Upper lobe of right lung (tissue), 1 donor: ENCODE measurements at regions of chr14 and their contacts with region 1.

Region 1: GRCh38 chr14:64764641-64765520 is 60.7 kb downstream of the PLEKHG3 start:
- DNase-seq: peak; percentile 86
- ATAC-seq: peak; percentile 88
- H3K4me3 ChIP-seq: peak overlapping the region; percentile 5
- H3K27ac ChIP-seq: peak overlapping the region; percentile 9
- H3K4me1 ChIP-seq: peaks cover 23% of the 10 kb centered on the region
- H3K27me3 ChIP-seq: no peaks in the 10 kb centered on the region
- CTCF ChIP-seq: peak; percentile 90

Region 2: DNA sequence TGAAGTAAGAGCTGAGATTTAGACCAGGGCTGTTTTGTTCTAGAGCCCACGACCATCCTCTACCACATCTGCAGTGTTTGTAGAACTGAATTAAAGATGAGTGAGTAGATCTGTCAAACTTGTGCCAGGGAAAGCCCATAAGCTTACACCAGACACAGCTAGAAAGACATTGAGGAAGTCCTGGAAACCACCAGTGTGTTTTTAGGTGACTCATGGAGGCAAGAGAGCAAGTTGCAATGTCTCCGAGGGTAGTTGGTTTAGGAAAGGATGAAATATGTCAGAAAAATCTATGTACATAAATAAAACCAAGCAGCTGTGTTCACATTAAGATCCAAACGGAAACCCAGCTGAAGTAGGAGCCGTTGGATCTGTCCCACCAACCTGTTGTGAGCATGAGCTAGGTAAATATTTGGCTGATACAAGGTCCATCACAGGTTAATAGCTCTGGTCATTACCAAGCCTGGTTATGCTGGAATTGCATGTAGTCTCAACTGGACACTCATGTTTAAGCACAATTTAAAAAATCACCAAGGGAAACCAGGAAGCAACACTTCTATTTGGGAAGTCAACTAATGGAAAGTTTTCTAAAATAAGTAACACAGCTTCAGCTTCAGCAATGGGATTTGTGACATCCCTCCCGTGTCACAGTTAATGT is 110.5 kb before region 1 on chr14:
- intact Hi-C with region 1: no loop called
- DNase-seq: no peak
- ATAC-seq: peak; percentile 82
- H3K4me3 ChIP-seq: no peak overlapping the region
- H3K27ac ChIP-seq: peak overlapping the region; percentile 52
- H3K4me1 ChIP-seq: peaks cover 5% of the 10 kb centered on the region
- H3K27me3 ChIP-seq: no peaks in the 10 kb centered on the region
- CTCF ChIP-seq: no peak

Region 3: DNA sequence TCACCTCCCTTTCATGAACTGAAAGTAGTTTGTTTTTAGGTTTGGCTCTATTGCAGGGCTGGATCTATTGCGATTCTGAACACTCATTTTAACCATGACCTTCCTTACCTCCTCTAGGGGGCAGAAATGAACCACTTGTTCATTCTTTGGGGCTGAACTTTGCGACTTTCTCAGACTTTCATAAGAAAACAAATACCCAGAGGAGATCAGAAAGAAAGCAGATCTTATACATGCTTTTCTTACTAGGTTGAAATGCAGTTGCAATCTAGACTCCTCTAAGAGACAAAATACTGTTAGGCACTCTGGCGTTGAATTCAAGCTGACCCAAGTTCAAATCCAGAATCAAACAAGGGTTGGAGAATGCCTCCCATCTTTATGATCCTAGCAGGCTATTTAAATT is 93.3 kb before region 1 on chr14:
- intact Hi-C with region 1: loop called (anchors 5 kb)
- DNase-seq: no peak
- ATAC-seq: peak; percentile 78
- H3K4me3 ChIP-seq: no peak overlapping the region
- H3K27ac ChIP-seq: no peak overlapping the region
- H3K4me1 ChIP-seq: peaks cover 6% of the 10 kb centered on the region
- H3K27me3 ChIP-seq: no peaks in the 10 kb centered on the region
- CTCF ChIP-seq: peak; percentile 75

Region 4: DNA sequence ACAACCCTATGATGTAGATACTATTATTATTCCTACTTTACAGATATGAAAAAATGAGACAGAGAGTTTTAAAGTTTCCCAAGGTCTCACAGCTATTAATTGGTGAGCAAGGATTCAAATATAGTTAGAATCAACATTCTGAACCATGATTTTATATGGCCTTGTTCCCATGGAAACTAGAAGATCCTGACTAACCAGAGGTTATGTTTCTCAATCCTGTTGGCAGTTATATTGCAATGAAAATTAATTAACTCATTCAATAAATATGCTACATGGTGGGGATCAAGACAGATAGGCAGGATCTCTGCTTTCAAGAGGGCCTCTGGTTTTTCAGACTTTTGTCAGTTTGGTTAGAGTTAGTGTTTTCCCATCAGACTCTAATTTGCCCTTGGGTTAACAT is 638.4 kb after region 1 on chr14:
- intact Hi-C with region 1: no loop called
- DNase-seq: no peak
- ATAC-seq: no peak
- H3K4me3 ChIP-seq: no peak overlapping the region
- H3K27ac ChIP-seq: no peak overlapping the region
- H3K4me1 ChIP-seq: no peaks in the 10 kb centered on the region
- H3K27me3 ChIP-seq: no peaks in the 10 kb centered on the region
- CTCF ChIP-seq: no peak